Transverse colon (tissue), 4 donors: ENCODE measurements at regions of chr15 and their contacts with region 1.

Region 1: DNA sequence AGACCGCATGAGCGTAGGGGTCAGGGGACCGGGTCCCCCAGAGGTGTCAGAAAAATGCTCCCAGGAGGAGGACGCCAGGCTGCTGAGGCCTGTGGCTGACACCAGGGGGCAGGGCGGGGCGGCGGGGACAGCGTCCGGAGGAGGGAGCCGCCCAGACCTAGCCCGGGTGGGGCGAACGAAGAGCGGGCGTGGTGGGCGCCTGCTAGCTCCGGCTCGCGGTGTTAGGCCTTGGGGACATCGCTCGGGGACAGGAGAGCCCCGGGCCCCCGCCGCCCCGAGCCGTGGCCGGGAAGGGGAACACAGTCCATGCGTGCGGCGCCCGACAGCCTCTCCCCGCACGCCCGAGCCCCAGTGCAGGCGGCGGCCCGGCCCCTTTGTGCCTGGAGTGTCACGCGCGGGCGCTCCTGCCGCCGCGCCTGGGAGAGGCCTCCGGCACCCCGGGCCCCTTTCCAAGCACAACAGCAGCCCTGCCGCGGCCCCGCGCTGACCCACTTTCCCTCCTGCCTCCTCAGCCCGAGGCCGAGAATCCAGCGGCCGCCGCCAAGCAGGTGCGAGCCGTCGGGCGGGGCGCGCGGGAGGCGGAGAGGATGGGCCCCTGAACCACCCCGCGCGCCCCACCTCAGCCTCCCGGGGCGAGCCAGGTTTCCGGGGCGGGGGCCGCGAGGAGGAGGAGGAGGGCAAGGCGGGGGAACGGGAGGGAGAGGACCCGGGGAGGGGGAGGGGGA is 111.0 kb upstream of the KLF13 start:
- DNase-seq: peak; percentile 92
- H3K4me3 ChIP-seq: peak overlapping the region; percentile 44 to 66 (median 60)
- H3K27ac ChIP-seq: peak overlapping the region; percentile 96 to 99 (median 98)
- H3K4me1 ChIP-seq: peaks cover 7 to 25% (median 19%) of the 10 kb centered on the region in 4 donors
- H3K27me3 ChIP-seq: no peaks in the 10 kb centered on the region
- CTCF ChIP-seq: peak; percentile 91 to 98 (median 95)
- EP300 ChIP-seq: peak; percentile 23
- POLR2A ChIP-seq: peak; percentile 76

Region 2: DNA sequence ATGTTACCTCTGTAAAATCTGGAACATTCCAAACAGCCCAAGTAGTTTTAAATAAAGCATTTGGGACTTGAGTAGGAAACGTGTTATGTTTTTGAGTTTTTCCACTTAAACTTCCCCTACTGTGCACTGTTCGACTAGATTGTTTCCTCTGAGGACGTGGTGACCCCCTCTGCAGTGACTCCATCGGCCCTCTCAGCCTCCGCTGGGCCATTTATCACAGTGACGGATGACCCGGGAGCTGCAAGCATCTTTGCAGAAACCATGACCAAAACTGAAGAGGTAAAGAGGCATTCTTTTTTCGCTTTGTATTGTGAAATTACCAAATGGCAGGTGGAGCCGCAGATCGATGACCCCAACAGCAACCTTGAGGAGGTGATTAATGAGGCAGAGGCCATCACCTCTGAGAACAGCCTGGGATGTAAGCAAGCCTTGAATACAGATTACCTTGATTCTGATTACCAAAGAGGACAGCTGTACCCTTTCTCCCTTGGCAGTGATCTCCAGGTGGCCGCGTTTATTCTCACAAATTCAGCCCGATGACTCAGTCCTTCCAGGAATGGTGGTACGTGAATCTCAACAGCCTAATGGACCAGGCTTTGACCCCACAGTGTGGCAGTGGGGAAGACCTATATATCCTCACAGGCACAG is 391.0 kb before region 1 on chr15:
- in situ Hi-C with region 1: no loop called
- intact Hi-C with region 1: no loop called
- DNase-seq: no peak
- H3K4me3 ChIP-seq: no peak overlapping the region
- H3K27ac ChIP-seq: no peak overlapping the region
- H3K4me1 ChIP-seq: no peaks in the 10 kb centered on the region
- H3K27me3 ChIP-seq: no peaks in the 10 kb centered on the region
- CTCF ChIP-seq: no peak
- EP300 ChIP-seq: no peak
- POLR2A ChIP-seq: no peak

Region 3: GRCh38 chr15:31302778-31303725 is 87.4 kb after region 1 on chr15:
- in situ Hi-C with region 1: loop called in 1 of 4 experiments (anchors 25 kb)
- intact Hi-C with region 1: no loop called
- DNase-seq: peak; percentile 52
- H3K4me3 ChIP-seq: no peak overlapping the region
- H3K27ac ChIP-seq: no peak overlapping the region
- H3K4me1 ChIP-seq: peaks cover 0 to 17% (median 5%) of the 10 kb centered on the region in 4 donors
- H3K27me3 ChIP-seq: no peaks in the 10 kb centered on the region
- CTCF ChIP-seq: no peak
- EP300 ChIP-seq: no peak
- POLR2A ChIP-seq: no peak

Region 4: DNA sequence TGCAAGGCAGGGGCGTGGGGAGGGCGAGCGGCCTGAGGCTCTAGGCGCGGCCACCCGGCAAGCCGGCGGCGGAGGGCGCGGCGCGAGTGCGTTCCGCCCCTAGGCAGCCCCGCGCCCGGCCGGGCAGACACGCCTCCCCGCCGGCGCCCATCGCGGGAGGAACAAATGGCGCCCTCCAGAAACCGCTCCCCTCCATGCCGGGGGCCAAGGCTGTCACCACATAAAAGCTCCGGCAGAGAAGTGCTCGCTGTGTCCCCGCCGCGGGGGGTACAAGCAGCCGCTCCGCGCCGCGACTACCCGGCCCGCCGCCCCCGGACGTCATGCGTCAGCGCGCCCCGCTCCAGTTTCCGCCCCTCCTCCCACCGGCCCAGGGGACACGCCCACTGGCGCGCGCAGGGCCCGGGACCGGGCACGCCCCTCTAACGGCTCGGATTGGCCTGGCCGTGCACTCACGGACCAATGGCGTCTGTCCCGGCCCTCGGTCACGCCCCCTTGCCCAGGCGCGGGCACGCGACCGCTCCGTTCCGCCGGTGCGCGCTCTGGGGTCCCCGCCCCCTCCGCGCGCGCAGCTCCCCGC is 110.6 kb after region 1 on chr15:
- in situ Hi-C with region 1: loop called (anchors 10 to 25 kb)
- intact Hi-C with region 1: loop called (anchors 5 kb)
- DNase-seq: peak; percentile 99
- H3K4me3 ChIP-seq: peak overlapping the region; percentile 61 to 97 (median 88)
- H3K27ac ChIP-seq: peak overlapping the region; percentile 98 to 100 (median 100)
- H3K4me1 ChIP-seq: peaks cover 14 to 38% (median 34%) of the 10 kb centered on the region in 4 donors
- H3K27me3 ChIP-seq: no peaks in the 10 kb centered on the region
- CTCF ChIP-seq: peak in 1 of 5 experiments; percentile 18
- EP300 ChIP-seq: peak; percentile 34
- POLR2A ChIP-seq: peak; percentile 95

Region 5: DNA sequence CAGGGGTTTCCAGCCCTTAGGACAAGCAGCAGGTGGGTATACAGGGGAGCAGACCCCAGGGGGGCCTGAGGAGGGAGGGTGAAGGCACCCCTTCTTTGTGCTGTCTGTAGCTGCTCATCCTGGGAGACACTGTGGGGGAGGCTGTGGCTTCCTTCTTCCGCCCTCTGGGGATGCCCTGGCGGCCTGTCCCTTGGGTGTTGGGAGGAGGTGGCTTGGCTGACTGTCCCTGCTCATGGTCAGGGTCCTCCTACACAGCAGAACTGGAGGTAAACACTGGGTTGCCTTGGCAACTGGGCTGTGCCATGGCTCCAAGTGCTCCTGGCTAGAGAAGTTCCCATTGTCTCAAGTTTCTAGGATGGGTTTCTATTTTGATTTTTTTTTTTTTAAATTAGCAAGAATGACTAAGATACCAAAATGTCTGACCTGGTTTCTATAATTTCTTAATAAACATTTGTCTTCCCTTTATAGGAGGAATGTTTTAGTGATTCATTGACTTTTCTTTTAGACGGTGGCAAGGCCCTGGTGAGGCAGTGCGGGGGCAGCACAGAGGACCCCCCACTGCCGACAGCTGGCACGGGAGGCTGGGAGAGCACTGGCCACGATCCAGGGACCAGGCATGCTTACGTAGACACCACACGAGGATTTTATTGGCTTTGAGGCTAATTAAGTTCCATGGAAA is 123.4 kb after region 1 on chr15:
- in situ Hi-C with region 1: loop called in 2 of 4 experiments (anchors 10 kb)
- intact Hi-C with region 1: no loop called
- DNase-seq: no peak
- H3K4me3 ChIP-seq: no peak overlapping the region
- H3K27ac ChIP-seq: peak overlapping the region; percentile 72 to 76 (median 74)
- H3K4me1 ChIP-seq: peaks cover 58 to 100% (median 79%) of the 10 kb centered on the region in 4 donors
- H3K27me3 ChIP-seq: no peaks in the 10 kb centered on the region
- CTCF ChIP-seq: no peak
- EP300 ChIP-seq: no peak
- POLR2A ChIP-seq: no peak

Region 6: DNA sequence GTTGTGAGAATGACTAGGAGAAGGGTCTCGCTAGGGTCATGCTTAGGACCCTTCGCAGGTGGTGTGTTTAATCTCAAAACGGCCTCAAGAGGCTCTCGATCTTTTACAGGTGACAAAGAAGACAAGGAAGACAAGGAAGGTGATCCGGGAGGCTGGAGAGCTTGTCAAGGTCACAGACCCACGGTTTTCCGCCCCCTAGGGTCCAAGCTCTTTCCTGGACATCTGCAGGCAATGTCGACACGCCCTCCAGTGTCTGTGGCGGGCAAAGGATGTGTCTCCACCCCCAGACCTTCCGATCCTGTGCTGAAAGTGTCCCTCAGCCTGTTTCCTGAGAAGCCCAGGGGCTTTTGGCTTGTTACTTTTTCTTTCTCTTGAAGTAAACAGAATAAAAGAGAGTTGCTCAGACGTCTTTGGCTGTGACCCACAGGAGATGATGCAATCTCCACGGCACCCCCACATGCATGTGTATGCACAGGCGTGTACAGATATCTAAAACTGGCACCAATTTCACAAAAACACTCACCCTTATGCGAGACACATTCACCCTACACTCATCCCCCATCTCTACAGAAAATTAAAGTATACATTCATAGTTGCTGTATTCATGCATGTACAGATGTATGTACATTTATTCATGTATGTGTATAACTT is 219.7 kb after region 1 on chr15:
- in situ Hi-C with region 1: loop called in 2 of 4 experiments (anchors 25 kb)
- intact Hi-C with region 1: loop called (anchors 5 kb)
- DNase-seq: peak; percentile 88
- H3K4me3 ChIP-seq: peak overlapping the region in 2 of 4 donors; percentile 2 to 16
- H3K27ac ChIP-seq: peak overlapping the region; percentile 75 to 79 (median 78)
- H3K4me1 ChIP-seq: peaks cover 16 to 32% (median 20%) of the 10 kb centered on the region in 4 donors
- H3K27me3 ChIP-seq: no peaks in the 10 kb centered on the region
- CTCF ChIP-seq: peak; percentile 60 to 81 (median 66)
- EP300 ChIP-seq: no peak
- POLR2A ChIP-seq: no peak

Region 7: DNA sequence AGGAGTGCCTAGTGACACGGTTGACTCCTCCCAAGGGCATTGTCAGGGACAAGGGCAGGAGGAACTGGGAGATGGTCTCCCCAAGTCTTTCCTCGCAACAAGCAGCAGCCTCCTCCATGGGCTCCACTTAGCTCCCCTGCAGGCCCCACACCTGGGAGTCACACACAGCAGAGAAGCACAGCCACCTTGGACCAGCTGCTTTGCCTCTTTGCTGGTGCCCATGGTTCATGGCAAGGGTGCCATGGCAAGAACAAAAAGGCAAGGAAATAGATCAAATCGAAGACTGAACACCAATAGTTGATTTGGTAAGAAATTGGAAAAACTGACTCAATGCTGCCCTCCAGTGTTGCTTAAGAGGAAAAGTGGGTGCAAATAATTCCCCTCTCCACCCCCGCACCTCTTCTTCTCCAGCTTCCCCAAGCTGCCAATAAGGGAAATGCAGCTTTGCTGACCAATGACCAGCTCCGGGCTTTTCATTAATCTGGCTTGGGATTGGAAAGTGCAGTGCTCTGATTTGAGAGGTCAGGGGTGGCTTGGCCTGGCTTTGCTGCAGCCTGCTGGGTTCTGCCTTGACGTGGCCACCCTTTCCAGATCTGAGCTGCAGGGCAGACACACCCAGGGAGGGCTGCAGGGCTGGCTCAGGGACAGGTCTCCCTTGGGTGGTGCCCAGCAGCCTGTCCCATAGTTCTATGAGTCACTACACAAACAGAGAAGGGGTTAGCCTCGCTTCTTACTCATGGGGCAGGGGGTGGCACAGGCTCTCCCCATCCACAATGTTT is 273.0 kb after region 1 on chr15:
- in situ Hi-C with region 1: loop called in 1 of 4 experiments (anchors 5 kb)
- intact Hi-C with region 1: loop called (anchors 5 kb)
- DNase-seq: peak; percentile 75
- H3K4me3 ChIP-seq: no peak overlapping the region
- H3K27ac ChIP-seq: peak overlapping the region; percentile 40 to 67 (median 64)
- H3K4me1 ChIP-seq: peaks cover 12 to 29% (median 22%) of the 10 kb centered on the region in 4 donors
- H3K27me3 ChIP-seq: peaks cover 5% of the 10 kb centered on the region
- CTCF ChIP-seq: peak; percentile 87 to 99 (median 93)
- EP300 ChIP-seq: no peak
- POLR2A ChIP-seq: no peak

Region 8: GRCh38 chr15:31537770-31538592 is 322.3 kb after region 1 on chr15:
- in situ Hi-C with region 1: no loop called
- intact Hi-C with region 1: no loop called
- DNase-seq: no peak
- H3K4me3 ChIP-seq: no peak overlapping the region
- H3K27ac ChIP-seq: no peak overlapping the region
- H3K4me1 ChIP-seq: no peaks in the 10 kb centered on the region
- H3K27me3 ChIP-seq: no peaks in the 10 kb centered on the region
- CTCF ChIP-seq: no peak
- EP300 ChIP-seq: no peak
- POLR2A ChIP-seq: no peak